Activated CD4-positive, alpha-beta T cell treated with anti-CD3 and anti-CD28 coated beads for 36 hours (primary cell): ENCODE measurements at regions of chr5 and their contacts with region 1.

Region 1: GRCh38 chr5:40277161-40277906 is 402.4 kb upstream of the PTGER4 start:
- DNase-seq: peak; percentile 59
- ATAC-seq: peak; percentile 77
- H3K4me3 Mint-ChIP-seq: peak overlapping the region; percentile 39
- H3K27ac Mint-ChIP-seq: peak overlapping the region; percentile 95
- H3K4me1 Mint-ChIP-seq: peaks cover 77% of the 10 kb centered on the region
- H3K27me3 Mint-ChIP-seq: no peaks in the 10 kb centered on the region

Region 2: DNA sequence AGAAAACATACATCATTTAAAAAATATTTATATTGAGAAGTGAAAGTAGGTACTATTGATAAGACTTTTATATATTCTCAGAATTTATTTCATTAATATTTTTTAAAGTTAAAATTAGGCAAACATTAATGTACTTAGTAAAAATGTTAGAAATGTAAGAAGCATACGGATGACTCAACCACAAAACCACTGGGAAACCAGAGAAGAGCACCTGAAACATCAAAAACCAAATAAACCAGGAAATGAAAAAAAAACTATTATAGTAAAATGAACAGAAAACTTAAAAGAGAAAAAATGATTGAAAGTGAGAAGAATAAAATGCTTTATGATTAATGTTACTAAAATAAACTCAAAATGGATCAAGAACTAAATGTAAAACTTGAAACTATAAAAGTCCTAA is 619.4 kb before region 1 on chr5:
- CTCF ChIA-PET with region 1: no interaction called
- POLR2A ChIA-PET with region 1: no interaction called
- intact Hi-C with region 1: loop called in 1 of 2 experiments (anchors 5 kb)
- DNase-seq: no peak
- ATAC-seq: no peak
- H3K4me3 Mint-ChIP-seq: no peak overlapping the region
- H3K27ac Mint-ChIP-seq: no peak overlapping the region
- H3K4me1 Mint-ChIP-seq: peaks cover 27% of the 10 kb centered on the region
- H3K27me3 Mint-ChIP-seq: peaks cover 19% of the 10 kb centered on the region

Region 3: GRCh38 chr5:40223884-40224402 is 53.4 kb before region 1 on chr5:
- CTCF ChIA-PET with region 1: no interaction called
- POLR2A ChIA-PET with region 1: interaction called, 11 read pairs
- intact Hi-C with region 1: loop called (anchors 1 kb)
- DNase-seq: peak; percentile 63
- ATAC-seq: peak; percentile 87
- H3K4me3 Mint-ChIP-seq: peak overlapping the region; percentile 50
- H3K27ac Mint-ChIP-seq: peak overlapping the region; percentile 94
- H3K4me1 Mint-ChIP-seq: peaks cover 64% of the 10 kb centered on the region
- H3K27me3 Mint-ChIP-seq: no peaks in the 10 kb centered on the region

Region 4: DNA sequence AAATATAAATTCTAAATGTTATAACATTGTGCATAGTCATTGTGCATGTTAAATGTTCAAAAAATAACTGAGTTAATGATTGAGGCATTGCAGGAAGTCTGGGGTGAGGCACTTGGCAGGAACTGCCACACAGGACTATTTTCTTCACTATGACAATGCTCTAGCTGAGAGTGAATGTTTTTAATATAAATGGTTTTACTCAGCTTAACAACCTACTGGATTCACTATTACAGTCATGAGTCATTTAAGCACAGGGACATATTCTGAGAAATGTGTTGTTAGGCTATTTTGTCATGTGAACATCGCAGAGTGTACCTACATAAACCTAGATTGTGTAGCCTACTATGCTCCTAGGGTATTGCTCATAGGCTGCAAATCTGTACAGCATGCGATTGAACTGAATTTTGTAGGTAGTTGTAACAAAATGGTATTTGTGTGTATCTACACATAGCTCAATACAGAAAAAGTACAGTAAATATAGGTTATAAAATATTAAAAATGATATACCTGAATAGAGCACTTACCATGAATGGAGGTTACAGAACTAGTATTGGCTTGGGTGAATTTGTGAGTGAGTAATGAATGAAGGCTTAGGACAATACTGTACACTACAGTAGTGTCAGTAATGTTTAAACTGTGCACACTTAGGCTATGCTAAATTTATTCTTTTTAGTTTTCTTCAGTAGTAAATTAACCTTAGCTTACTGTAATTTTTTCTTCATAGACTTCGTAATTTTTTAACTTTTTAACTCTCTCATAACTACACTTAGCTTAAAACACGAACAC is 56.3 kb after region 1 on chr5:
- CTCF ChIA-PET with region 1: interaction called, 8 read pairs
- POLR2A ChIA-PET with region 1: interaction called, 8 read pairs
- intact Hi-C with region 1: loop called (anchors 1 kb)
- DNase-seq: peak; percentile 49
- ATAC-seq: peak; percentile 96
- H3K4me3 Mint-ChIP-seq: no peak overlapping the region
- H3K27ac Mint-ChIP-seq: no peak overlapping the region
- H3K4me1 Mint-ChIP-seq: peaks cover 41% of the 10 kb centered on the region
- H3K27me3 Mint-ChIP-seq: no peaks in the 10 kb centered on the region

Region 5: GRCh38 chr5:40356248-40356647 is 78.9 kb after region 1 on chr5:
- CTCF ChIA-PET with region 1: no interaction called
- POLR2A ChIA-PET with region 1: no interaction called
- intact Hi-C with region 1: no loop called
- DNase-seq: no peak
- ATAC-seq: no peak
- H3K4me3 Mint-ChIP-seq: no peak overlapping the region
- H3K27ac Mint-ChIP-seq: no peak overlapping the region
- H3K4me1 Mint-ChIP-seq: peaks cover 6% of the 10 kb centered on the region
- H3K27me3 Mint-ChIP-seq: no peaks in the 10 kb centered on the region

Region 6: GRCh38 chr5:40410231-40410861 is 133.0 kb after region 1 on chr5:
- CTCF ChIA-PET with region 1: interaction called, 5 read pairs
- POLR2A ChIA-PET with region 1: interaction called, 3 read pairs
- intact Hi-C with region 1: loop called (anchors 1 kb)
- DNase-seq: peak; percentile 80
- ATAC-seq: peak; percentile 82
- H3K4me3 Mint-ChIP-seq: peak overlapping the region; percentile 58
- H3K27ac Mint-ChIP-seq: peak overlapping the region; percentile 94
- H3K4me1 Mint-ChIP-seq: peaks cover 67% of the 10 kb centered on the region
- H3K27me3 Mint-ChIP-seq: no peaks in the 10 kb centered on the region

Region 7: GRCh38 chr5:40578501-40579451 is 301.4 kb after region 1 on chr5:
- CTCF ChIA-PET with region 1: no interaction called
- POLR2A ChIA-PET with region 1: interaction called, 4 read pairs
- intact Hi-C with region 1: loop called (anchors 1 kb)
- DNase-seq: peak; percentile 84
- ATAC-seq: peak; percentile 95
- H3K4me3 Mint-ChIP-seq: peak overlapping the region; percentile 49
- H3K27ac Mint-ChIP-seq: peak overlapping the region; percentile 72
- H3K4me1 Mint-ChIP-seq: peaks cover 44% of the 10 kb centered on the region
- H3K27me3 Mint-ChIP-seq: no peaks in the 10 kb centered on the region

Region 8: DNA sequence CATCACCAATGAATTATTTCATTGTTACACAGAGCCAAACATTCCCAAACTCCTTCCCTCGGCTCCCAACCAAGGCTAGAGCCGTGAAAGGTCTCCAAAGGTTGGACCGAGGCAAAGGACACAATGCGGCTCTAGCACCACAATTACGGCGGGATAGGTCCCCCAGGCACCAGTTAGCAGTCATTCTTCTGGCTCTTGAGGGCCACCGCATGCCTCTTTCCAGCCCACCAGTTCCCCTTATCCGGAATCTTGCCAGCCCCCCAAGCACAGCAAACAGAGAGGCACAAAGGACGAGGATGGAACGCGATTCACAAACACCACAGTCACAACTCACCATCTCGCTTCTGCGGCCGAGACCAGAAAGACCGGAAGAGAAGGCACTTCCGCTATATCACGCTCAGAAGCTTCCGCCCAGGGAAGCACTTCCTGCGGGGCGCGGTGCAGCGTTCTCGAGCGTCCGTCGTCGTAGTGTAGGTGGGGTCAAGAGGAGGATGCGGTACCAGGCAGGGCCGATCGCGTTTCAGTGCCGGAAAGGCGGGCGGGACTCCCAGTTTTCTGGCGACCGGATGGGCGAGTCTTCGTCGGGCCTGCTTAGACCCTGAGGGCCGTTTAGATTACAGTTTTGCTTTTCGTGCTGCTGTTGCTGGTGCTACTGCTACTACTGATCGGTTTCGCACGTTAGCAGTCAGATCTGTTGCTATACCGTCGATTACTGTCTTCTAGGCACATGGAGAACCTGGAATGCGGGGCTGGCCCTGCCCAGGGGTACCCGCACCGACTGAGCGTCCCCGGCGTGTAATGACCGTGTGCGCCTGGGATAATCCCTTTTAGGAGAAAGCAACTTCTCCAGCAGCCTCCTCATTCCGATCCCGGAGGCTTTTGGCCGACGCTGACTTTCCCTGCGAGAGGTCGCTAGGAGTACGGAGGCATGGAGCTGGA is 557.8 kb after region 1 on chr5 and contains the start of gene RPL37:
- CTCF ChIA-PET with region 1: no interaction called
- POLR2A ChIA-PET with region 1: no interaction called
- intact Hi-C with region 1: loop called in 1 of 2 experiments (anchors 10 kb)
- DNase-seq: peak; percentile 96
- ATAC-seq: peak; percentile 93
- H3K4me3 Mint-ChIP-seq: peak within 1 kb of the TSS; percentile 99
- H3K27ac Mint-ChIP-seq: peak within 1 kb of the TSS; percentile 100
- H3K4me1 Mint-ChIP-seq: peaks cover 44% of the 10 kb centered on the region
- H3K27me3 Mint-ChIP-seq: no peaks in the 10 kb centered on the region
- total RNA-seq, gene RPL37: 1,915 to 1,951 TPM